ENCODE measurements at regions of chr11 and their contacts with region 1.

Region 1: GRCh38 chr11:131867457-131868257 is 497.2 kb downstream of the NTM start:
- DNase-seq: peak; percentile 69
- ATAC-seq: peak; percentile 87 to 90

Region 2: GRCh38 chr11:132330515-132330914 is 462.9 kb after region 1 on chr11:
- intact Hi-C with region 1: loop called in 1 of 2 experiments (anchors 10 kb)
- DNase-seq: no peak
- ATAC-seq: no peak

Region 3: GRCh38 chr11:132402071-132402684 is 534.5 kb after region 1 on chr11:
- intact Hi-C with region 1: loop called in 1 of 2 experiments (anchors 5 kb)
- DNase-seq: no peak
- ATAC-seq: peak; percentile 78 to 90

Measured in left cardiac atrium (tissue), 4 donors.